ENCODE measurements at regions of chr1 and their contacts with region 1.

Region 1: GRCh38 chr1:39933956-39934941 is 20.7 kb upstream of the MFSD2A start:
- DNase-seq: peak; percentile 86
- ATAC-seq: peak; percentile 89
- H3K4me3 ChIP-seq: peak overlapping the region in 1 of 3 experiments; percentile 14; a peak in 2 of 6 replicates
- H3K27ac ChIP-seq: peak overlapping the region; percentile 43
- H3K4me1 ChIP-seq: peaks cover 20% of the 10 kb centered on the region
- H3K27me3 ChIP-seq: no peaks in the 10 kb centered on the region
- CTCF ChIP-seq: no peak
- EP300 ChIP-seq: peak; percentile 60 to 73; a peak in 3 of 4 replicates
- POLR2A ChIP-seq: no peak
- RAD21 ChIP-seq: no peak

Region 2: GRCh38 chr1:39866767-39867166 is 67.5 kb before region 1 on chr1:
- CTCF ChIA-PET with region 1: no interaction called
- POLR2A ChIA-PET with region 1: no interaction called
- in situ Hi-C with region 1: no loop called
- intact Hi-C with region 1: no loop called
- DNase-seq: no peak
- ATAC-seq: no peak
- H3K4me3 ChIP-seq: no peak overlapping the region
- H3K27ac ChIP-seq: no peak overlapping the region
- H3K4me1 ChIP-seq: peaks cover 2% of the 10 kb centered on the region; the same call in 1 of the 2 replicates
- H3K27me3 ChIP-seq: no peaks in the 10 kb centered on the region
- CTCF ChIP-seq: no peak
- EP300 ChIP-seq: no peak
- POLR2A ChIP-seq: no peak
- RAD21 ChIP-seq: no peak

Region 3: GRCh38 chr1:39892601-39893595 is 41.4 kb before region 1 on chr1:
- CTCF ChIA-PET with region 1: no interaction called
- POLR2A ChIA-PET with region 1: no interaction called
- in situ Hi-C with region 1: no loop called
- intact Hi-C with region 1: no loop called
- DNase-seq: peak; percentile 23
- ATAC-seq: peak; percentile 61
- H3K4me3 ChIP-seq: no peak overlapping the region
- H3K27ac ChIP-seq: no peak overlapping the region
- H3K4me1 ChIP-seq: peaks cover 39% of the 10 kb centered on the region
- H3K27me3 ChIP-seq: peaks cover 0 to 14% of the 10 kb centered on the region in 2 experiments; a peak in 2 of 5 replicates
- CTCF ChIP-seq: no peak
- EP300 ChIP-seq: no peak
- POLR2A ChIP-seq: no peak
- RAD21 ChIP-seq: no peak

Region 4: DNA sequence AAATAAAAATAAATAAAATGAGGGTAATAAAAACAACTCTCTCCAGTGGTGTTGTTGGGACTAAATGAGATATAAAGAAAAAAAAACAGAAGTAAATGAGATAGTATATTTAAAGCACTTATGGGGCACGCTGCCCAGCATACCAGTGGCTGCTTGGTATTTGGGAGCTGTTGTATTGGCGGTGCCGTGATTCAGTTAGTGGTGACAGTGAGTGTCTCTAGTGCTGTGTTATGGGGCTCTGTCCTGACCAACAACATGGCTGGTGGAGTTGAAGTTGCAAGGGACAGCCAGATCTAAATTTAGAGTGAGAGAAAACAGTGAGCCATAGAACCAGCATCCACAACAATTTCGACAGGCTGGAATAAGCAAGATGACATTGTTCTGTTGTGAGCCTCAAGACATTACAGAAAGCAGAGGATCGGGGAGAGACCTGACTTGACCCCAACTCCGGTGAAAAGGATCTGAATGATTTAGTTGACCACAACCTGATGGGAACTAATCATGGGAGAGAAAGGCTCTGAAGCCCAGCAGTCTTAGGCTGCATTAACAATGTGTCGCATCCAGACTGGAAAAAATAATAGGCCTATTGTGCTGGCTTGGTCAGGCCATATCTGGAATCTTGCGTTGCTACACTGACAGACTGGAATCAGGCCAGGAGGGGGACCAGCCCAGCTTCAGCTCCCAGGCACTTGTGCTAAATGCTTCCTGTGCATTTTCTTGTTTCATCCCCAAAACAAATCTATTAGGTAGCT is 18.3 kb after region 1 on chr1:
- CTCF ChIA-PET with region 1: no interaction called
- POLR2A ChIA-PET with region 1: no interaction called
- in situ Hi-C with region 1: no loop called
- intact Hi-C with region 1: loop called (anchors 1 kb)
- DNase-seq: peak; percentile 66
- ATAC-seq: peak; percentile 59
- H3K4me3 ChIP-seq: no peak overlapping the region
- H3K27ac ChIP-seq: no peak overlapping the region
- H3K4me1 ChIP-seq: peaks cover 18% of the 10 kb centered on the region
- H3K27me3 ChIP-seq: peaks cover 8 to 38% of the 10 kb centered on the region in 2 experiments
- CTCF ChIP-seq: no peak
- EP300 ChIP-seq: no peak
- POLR2A ChIP-seq: no peak
- RAD21 ChIP-seq: no peak

Region 5: DNA sequence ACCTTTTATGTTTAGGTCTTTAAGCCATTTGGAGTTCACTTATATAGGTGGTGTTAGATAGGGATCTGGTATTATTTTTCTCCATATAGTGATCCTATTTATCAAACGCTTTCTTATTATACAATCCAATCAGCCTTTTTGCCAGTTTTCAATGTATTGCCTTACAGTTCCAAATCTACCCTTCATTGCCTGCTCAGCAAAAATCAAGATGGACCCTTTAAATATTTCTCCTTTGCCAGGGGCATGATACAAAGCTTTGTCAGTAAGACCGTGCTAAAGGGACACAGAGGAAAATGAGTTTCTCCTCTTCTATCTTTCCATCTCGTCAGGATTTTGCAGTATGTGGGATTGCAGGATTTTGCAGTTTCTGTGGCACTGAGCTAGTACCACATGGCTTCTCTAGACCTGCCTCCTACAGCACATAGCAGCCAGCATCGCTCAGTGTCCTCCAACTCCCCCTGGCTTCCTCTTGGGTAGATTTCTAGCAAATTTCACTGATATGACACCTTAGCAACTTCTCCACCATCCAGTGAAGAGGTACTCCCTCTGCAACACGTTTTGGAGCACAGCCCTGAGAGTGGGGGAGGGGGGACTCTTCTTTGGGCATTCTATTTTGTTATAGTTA is 83.8 kb after region 1 on chr1:
- CTCF ChIA-PET with region 1: no interaction called
- POLR2A ChIA-PET with region 1: no interaction called
- in situ Hi-C with region 1: no loop called
- intact Hi-C with region 1: no loop called
- DNase-seq: no peak
- ATAC-seq: peak; percentile 63; the same call in 2 of the 3 replicates
- H3K4me3 ChIP-seq: no peak overlapping the region
- H3K27ac ChIP-seq: no peak overlapping the region
- H3K4me1 ChIP-seq: no peaks in the 10 kb centered on the region
- H3K27me3 ChIP-seq: no peaks in the 10 kb centered on the region
- CTCF ChIP-seq: no peak
- EP300 ChIP-seq: no peak
- POLR2A ChIP-seq: no peak
- RAD21 ChIP-seq: no peak